ENCODE measurements at regions of chr7 and their contacts with region 1.

Region 1: GRCh38 chr7:34091323-34091917 is 186.1 kb downstream of the BMPER start:
- DNase-seq: peak; percentile 42
- H3K4me3 ChIP-seq: no peak overlapping the region
- H3K27ac ChIP-seq: no peak overlapping the region
- H3K4me1 ChIP-seq: peaks cover 15% of the 10 kb centered on the region
- H3K27me3 ChIP-seq: no peaks in the 10 kb centered on the region
- CTCF ChIP-seq: peak; percentile 64 to 72

Region 2: GRCh38 chr7:33185786-33186185 is 905.6 kb before region 1 on chr7:
- CTCF ChIA-PET with region 1: no interaction called
- dilution Hi-C with region 1: no loop called
- in situ Hi-C with region 1: no loop called
- intact Hi-C with region 1: loop called (anchors 1 kb)
- DNase-seq: peak; percentile 44
- H3K4me3 ChIP-seq: no peak overlapping the region
- H3K27ac ChIP-seq: no peak overlapping the region
- H3K4me1 ChIP-seq: no peaks in the 10 kb centered on the region
- H3K27me3 ChIP-seq: no peaks in the 10 kb centered on the region
- CTCF ChIP-seq: peak; percentile 72 to 74

Region 3: GRCh38 chr7:33757562-33758165 is 333.8 kb before region 1 on chr7:
- CTCF ChIA-PET with region 1: no interaction called
- dilution Hi-C with region 1: no loop called
- in situ Hi-C with region 1: no loop called
- intact Hi-C with region 1: loop called (anchors 2 kb)
- DNase-seq: peak; percentile 10
- H3K4me3 ChIP-seq: no peak overlapping the region
- H3K27ac ChIP-seq: no peak overlapping the region
- H3K4me1 ChIP-seq: no peaks in the 10 kb centered on the region
- H3K27me3 ChIP-seq: no peaks in the 10 kb centered on the region
- CTCF ChIP-seq: peak; percentile 57 to 58

Region 4: GRCh38 chr7:33807779-33808482 is 283.5 kb before region 1 on chr7:
- CTCF ChIA-PET with region 1: no interaction called
- dilution Hi-C with region 1: no loop called
- in situ Hi-C with region 1: no loop called
- intact Hi-C with region 1: loop called (anchors 10 kb)
- DNase-seq: peak; percentile 95
- H3K4me3 ChIP-seq: no peak overlapping the region
- H3K27ac ChIP-seq: peak overlapping the region; percentile 99
- H3K4me1 ChIP-seq: peaks cover 28% of the 10 kb centered on the region
- H3K27me3 ChIP-seq: no peaks in the 10 kb centered on the region
- CTCF ChIP-seq: peak; percentile 93 to 94

Region 5: DNA sequence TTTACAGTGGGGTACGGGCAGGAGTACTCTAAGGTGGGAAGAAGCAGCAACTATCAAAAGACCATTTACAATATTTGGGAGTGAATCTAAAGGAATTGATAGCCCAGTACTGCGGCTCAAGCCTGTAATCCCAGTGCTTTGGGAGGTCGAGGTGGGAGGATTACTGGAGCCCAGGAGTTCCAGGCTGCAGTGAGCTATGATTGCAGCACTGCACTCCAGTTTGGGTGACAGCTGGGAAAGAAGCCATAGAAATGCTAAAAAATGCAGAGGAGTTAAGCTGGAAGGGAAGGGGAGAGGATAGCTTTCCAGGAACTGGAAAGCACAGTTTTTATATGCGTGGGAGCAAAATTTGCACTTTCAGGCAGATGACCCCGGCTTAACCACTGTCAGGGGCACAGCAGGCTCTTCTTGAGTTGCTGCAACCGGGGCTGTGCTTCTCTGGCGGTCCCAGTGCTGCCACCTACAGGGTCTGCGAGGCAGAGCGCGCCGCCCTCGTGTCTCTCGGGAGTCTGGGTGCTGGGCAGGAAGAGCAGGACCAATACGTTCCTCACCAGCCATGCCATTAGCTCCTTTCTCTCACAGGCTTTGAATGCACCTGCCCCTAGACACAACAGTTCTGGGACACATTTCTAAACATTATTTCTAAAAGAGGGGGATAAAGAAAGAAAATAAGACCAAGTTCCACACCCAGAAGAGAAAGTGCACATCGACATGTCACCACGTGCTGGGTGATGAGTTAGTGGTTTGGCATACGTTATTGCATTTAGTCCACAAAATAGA is 196.2 kb before region 1 on chr7:
- CTCF ChIA-PET with region 1: no interaction called
- dilution Hi-C with region 1: no loop called
- in situ Hi-C with region 1: no loop called
- intact Hi-C with region 1: no loop called
- DNase-seq: peak; percentile 77
- H3K4me3 ChIP-seq: no peak overlapping the region
- H3K27ac ChIP-seq: no peak overlapping the region
- H3K4me1 ChIP-seq: peaks cover 5% of the 10 kb centered on the region
- H3K27me3 ChIP-seq: no peaks in the 10 kb centered on the region
- CTCF ChIP-seq: peak; percentile 88 to 93

Region 6: GRCh38 chr7:33986941-33987588 is 104.4 kb before region 1 on chr7:
- CTCF ChIA-PET with region 1: interaction called, 94 read pairs
- dilution Hi-C with region 1: no loop called
- in situ Hi-C with region 1: loop called (anchors 10 kb)
- intact Hi-C with region 1: loop called (anchors 1 kb)
- DNase-seq: peak; percentile 96
- H3K4me3 ChIP-seq: no peak overlapping the region
- H3K27ac ChIP-seq: peak overlapping the region; percentile 68
- H3K4me1 ChIP-seq: peaks cover 29% of the 10 kb centered on the region
- H3K27me3 ChIP-seq: no peaks in the 10 kb centered on the region
- CTCF ChIP-seq: no peak

Region 7: GRCh38 chr7:34042406-34042805 is 49.0 kb before region 1 on chr7:
- CTCF ChIA-PET with region 1: no interaction called
- dilution Hi-C with region 1: no loop called
- in situ Hi-C with region 1: no loop called
- intact Hi-C with region 1: no loop called
- DNase-seq: no peak
- H3K4me3 ChIP-seq: no peak overlapping the region
- H3K27ac ChIP-seq: no peak overlapping the region
- H3K4me1 ChIP-seq: no peaks in the 10 kb centered on the region
- H3K27me3 ChIP-seq: peaks cover 4% of the 10 kb centered on the region
- CTCF ChIP-seq: no peak

Region 8: GRCh38 chr7:34165929-34166550 is 74.6 kb after region 1 on chr7:
- CTCF ChIA-PET with region 1: no interaction called
- dilution Hi-C with region 1: no loop called
- in situ Hi-C with region 1: no loop called
- intact Hi-C with region 1: loop called (anchors 1 kb)
- DNase-seq: peak; percentile 33
- H3K4me3 ChIP-seq: no peak overlapping the region
- H3K27ac ChIP-seq: no peak overlapping the region
- H3K4me1 ChIP-seq: no peaks in the 10 kb centered on the region
- H3K27me3 ChIP-seq: no peaks in the 10 kb centered on the region
- CTCF ChIP-seq: peak; percentile 50 to 77

Region 9: GRCh38 chr7:34430458-34430857 is 339.0 kb after region 1 on chr7:
- CTCF ChIA-PET with region 1: no interaction called
- dilution Hi-C with region 1: no loop called
- in situ Hi-C with region 1: no loop called
- intact Hi-C with region 1: loop called (anchors 1 kb)
- DNase-seq: peak; percentile 55
- H3K4me3 ChIP-seq: no peak overlapping the region
- H3K27ac ChIP-seq: no peak overlapping the region
- H3K4me1 ChIP-seq: no peaks in the 10 kb centered on the region
- H3K27me3 ChIP-seq: no peaks in the 10 kb centered on the region
- CTCF ChIP-seq: peak; percentile 85 to 93